ENCODE measurements at regions of chr13 and their contacts with region 1.

Region 1: GRCh38 chr13:24270639-24271141 is 38.7 kb upstream of the C1QTNF9 start:
- DNase-seq: peak; percentile 80
- ATAC-seq: peak; percentile 37
- H3K4me3 Mint-ChIP-seq: peak overlapping the region; percentile 87
- H3K27ac Mint-ChIP-seq: peak overlapping the region; percentile 97
- H3K4me1 Mint-ChIP-seq: peaks cover 85% of the 10 kb centered on the region
- H3K27me3 Mint-ChIP-seq: no peaks in the 10 kb centered on the region

Region 2: GRCh38 chr13:24178847-24179485 is 91.7 kb before region 1 on chr13:
- CTCF ChIA-PET with region 1: no interaction called
- POLR2A ChIA-PET with region 1: interaction called, 3 read pairs
- intact Hi-C with region 1: loop called in 1 of 2 experiments (anchors 5 kb)
- DNase-seq: no peak
- ATAC-seq: peak; percentile 92
- H3K4me3 Mint-ChIP-seq: no peak overlapping the region
- H3K27ac Mint-ChIP-seq: peak overlapping the region; percentile 8
- H3K4me1 Mint-ChIP-seq: peaks cover 31% of the 10 kb centered on the region
- H3K27me3 Mint-ChIP-seq: no peaks in the 10 kb centered on the region

Region 3: GRCh38 chr13:24234200-24234915 is 36.3 kb before region 1 on chr13:
- CTCF ChIA-PET with region 1: interaction called, 4 read pairs
- POLR2A ChIA-PET with region 1: no interaction called
- intact Hi-C with region 1: loop called in 1 of 2 experiments (anchors 1 kb)
- DNase-seq: no peak
- ATAC-seq: no peak
- H3K4me3 Mint-ChIP-seq: no peak overlapping the region
- H3K27ac Mint-ChIP-seq: peak overlapping the region; percentile 72
- H3K4me1 Mint-ChIP-seq: peaks cover 34% of the 10 kb centered on the region
- H3K27me3 Mint-ChIP-seq: no peaks in the 10 kb centered on the region

Region 4: DNA sequence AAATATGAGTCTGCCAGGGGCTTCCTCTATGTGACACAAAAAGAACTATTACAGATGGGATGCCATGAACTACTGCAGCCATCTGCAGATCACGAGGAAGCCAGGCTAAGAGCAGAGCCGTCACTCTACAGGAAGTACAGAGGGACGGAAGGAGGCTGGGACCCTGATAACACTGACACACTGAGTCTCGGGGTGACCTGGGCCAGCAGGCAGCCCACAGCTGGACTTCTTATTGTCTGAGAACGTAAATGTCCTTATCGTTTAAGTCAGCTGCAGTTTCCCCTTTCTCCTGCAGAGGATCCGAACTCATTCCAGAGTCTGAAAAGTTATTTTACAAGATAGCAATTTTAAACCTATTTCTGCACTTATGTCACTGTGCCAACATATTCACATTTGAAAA is 221.2 kb after region 1 on chr13:
- CTCF ChIA-PET with region 1: no interaction called
- POLR2A ChIA-PET with region 1: no interaction called
- intact Hi-C with region 1: no loop called
- DNase-seq: no peak
- ATAC-seq: no peak
- H3K4me3 Mint-ChIP-seq: no peak overlapping the region
- H3K27ac Mint-ChIP-seq: no peak overlapping the region
- H3K4me1 Mint-ChIP-seq: no peaks in the 10 kb centered on the region
- H3K27me3 Mint-ChIP-seq: no peaks in the 10 kb centered on the region

Measured in activated CD4-positive, alpha-beta T cell treated with anti-CD3 and anti-CD28 coated beads for 36 hours (primary cell).